ENCODE measurements at regions of chr15 and their contacts with region 1.

Region 1: DNA sequence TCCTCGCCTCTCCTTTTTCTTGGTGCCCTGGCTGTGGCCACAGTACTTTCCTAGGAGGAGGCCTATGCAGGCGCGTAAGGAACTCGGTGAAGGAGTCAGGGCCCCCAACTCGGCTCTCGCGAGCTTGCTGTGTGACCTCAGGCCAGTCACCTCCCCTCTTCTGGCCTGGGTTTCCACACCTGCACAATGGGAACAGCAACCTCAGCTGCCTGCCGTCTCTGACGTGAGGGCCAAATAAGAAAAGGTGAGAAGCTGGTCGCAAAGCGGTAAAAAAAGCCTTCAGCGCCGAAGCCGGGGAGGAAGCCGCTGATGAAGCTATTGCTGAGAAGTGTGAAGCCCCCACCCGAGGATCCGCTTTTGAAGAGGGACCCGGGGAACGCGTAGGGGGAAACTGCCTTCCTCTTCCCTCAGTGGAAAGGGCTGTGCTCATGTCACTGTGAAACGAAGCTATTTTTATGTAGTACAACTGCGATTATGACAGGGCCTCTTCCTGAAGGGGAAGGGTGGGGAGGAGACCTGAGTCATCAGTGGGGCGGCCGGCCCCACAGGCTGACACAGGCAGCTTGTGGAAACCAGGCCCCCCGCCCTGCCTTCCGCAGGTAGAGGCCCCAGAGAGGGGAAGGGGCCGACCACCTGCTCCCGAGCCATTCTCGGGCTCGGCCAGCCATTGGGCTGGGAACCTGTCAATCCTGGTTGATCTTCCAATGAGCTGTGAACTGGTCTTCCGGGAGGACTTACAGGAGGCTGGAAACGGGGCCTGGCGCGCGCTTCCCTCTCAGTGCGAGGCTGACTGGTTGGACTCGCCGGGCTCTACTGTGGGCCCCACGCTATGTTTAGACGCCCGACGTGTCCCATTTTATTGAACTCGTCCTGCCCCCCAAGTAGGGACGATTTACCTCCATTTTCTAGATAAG is 18.0 kb upstream of the ANKDD1A start:
- DNase-seq: peak; percentile 91 to 98
- H3K4me3 ChIP-seq: peak overlapping the region; percentile 52; the same call in 1 of the 2 replicates
- H3K27ac ChIP-seq: peak overlapping the region; percentile 71
- H3K4me1 ChIP-seq: peaks cover 40% of the 10 kb centered on the region
- H3K27me3 ChIP-seq: no peaks in the 10 kb centered on the region
- CTCF ChIP-seq: no peak

Region 2: GRCh38 chr15:64387562-64388168 is 506.1 kb before region 1 on chr15 and contains the start of gene TRIP4:
- CTCF ChIA-PET with region 1: no interaction called
- POLR2A ChIA-PET with region 1: interaction called, 13 read pairs
- intact Hi-C with region 1: no loop called
- DNase-seq: peak; percentile 89 to 94
- H3K4me3 ChIP-seq: peak within 1 kb of the TSS; percentile 95
- H3K27ac ChIP-seq: peak within 1 kb of the TSS; percentile 74
- H3K4me1 ChIP-seq: no peaks in the 10 kb centered on the region
- H3K27me3 ChIP-seq: no peaks in the 10 kb centered on the region
- CTCF ChIP-seq: no peak
- total RNA-seq, gene TRIP4: 15.5 and 18.1 TPM in 2 replicates

Region 3: GRCh38 chr15:64841258-64842095 is 52.3 kb before region 1 on chr15 and contains the start of gene PLEKHO2:
- CTCF ChIA-PET with region 1: interaction called, 3 read pairs
- POLR2A ChIA-PET with region 1: interaction called, 6 read pairs
- intact Hi-C with region 1: loop called (anchors 2 kb)
- DNase-seq: peak; percentile 71 to 92
- H3K4me3 ChIP-seq: peak within 1 kb of the TSS; percentile 61
- H3K27ac ChIP-seq: no peak within 1 kb of the TSS
- H3K4me1 ChIP-seq: no peaks in the 10 kb centered on the region
- H3K27me3 ChIP-seq: no peaks in the 10 kb centered on the region
- CTCF ChIP-seq: no peak
- total RNA-seq, gene PLEKHO2: 7.5 and 7.9 TPM in 2 replicates

Region 4: DNA sequence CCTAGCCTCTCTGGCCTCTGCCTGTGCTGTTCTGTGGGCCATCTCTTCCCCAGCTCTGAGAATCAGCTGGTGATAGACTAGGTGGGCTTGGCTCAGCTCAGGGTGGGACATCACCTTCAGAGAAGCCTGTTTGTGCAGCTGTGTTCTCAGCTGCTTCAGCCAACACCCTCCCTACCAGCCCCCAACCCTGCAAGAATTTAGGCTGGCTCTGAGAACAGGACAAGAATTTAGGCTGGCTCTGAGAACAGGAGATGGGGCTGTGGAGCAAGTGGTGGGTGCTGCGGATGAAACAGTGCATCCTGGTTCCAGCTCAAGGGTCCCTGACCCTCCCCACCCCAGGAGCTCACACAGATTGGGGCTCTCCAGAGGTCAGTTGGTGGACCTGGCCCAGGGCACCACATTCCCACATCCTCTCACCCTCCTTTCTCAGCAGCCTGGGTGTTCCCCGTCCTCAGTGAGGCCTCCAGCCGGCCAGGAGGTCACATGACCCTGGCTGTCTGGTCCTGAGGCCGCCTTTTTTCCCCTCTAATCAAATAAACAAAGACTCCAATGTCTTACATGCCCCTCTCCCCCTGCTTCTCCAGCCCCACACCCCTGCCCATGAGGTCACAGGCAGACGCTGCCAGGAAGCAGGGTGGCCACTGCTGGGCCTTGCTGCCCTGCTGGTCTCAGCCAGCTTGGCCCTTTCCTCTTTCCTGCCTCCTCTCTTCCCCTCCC is 37.2 kb before region 1 on chr15:
- CTCF ChIA-PET with region 1: no interaction called
- POLR2A ChIA-PET with region 1: interaction called, 10 read pairs
- intact Hi-C with region 1: no loop called
- DNase-seq: no peak
- H3K4me3 ChIP-seq: no peak overlapping the region
- H3K27ac ChIP-seq: no peak overlapping the region
- H3K4me1 ChIP-seq: no peaks in the 10 kb centered on the region
- H3K27me3 ChIP-seq: no peaks in the 10 kb centered on the region
- CTCF ChIP-seq: no peak

Region 5: DNA sequence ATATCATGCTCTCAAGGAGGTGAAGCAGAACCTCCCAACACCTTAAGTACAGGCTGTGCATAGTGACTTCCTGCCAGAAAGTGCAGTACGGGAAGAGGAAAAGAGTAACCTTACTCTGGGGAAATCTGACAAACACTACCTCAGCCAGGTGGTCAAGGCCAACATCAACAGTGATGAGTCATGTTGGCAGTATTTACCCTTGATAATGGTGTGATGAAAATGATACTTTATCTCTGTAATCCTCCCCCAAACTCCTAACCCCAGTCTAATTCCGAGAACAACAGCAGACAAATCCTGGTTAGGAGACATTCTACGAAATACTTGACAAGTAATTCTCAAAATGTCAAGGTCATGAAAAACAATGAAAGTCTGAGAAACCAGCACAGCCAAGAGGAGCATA is 44.5 kb after region 1 on chr15:
- CTCF ChIA-PET with region 1: no interaction called
- POLR2A ChIA-PET with region 1: interaction called, 3 read pairs
- intact Hi-C with region 1: loop called (anchors 2 kb)
- DNase-seq: peak; percentile 35 to 72
- H3K4me3 ChIP-seq: no peak overlapping the region
- H3K27ac ChIP-seq: peak overlapping the region; percentile 64
- H3K4me1 ChIP-seq: peaks cover 9% of the 10 kb centered on the region
- H3K27me3 ChIP-seq: no peaks in the 10 kb centered on the region
- CTCF ChIP-seq: no peak